ENCODE measurements at regions of chr3 and their contacts with region 1.

Region 1: DNA sequence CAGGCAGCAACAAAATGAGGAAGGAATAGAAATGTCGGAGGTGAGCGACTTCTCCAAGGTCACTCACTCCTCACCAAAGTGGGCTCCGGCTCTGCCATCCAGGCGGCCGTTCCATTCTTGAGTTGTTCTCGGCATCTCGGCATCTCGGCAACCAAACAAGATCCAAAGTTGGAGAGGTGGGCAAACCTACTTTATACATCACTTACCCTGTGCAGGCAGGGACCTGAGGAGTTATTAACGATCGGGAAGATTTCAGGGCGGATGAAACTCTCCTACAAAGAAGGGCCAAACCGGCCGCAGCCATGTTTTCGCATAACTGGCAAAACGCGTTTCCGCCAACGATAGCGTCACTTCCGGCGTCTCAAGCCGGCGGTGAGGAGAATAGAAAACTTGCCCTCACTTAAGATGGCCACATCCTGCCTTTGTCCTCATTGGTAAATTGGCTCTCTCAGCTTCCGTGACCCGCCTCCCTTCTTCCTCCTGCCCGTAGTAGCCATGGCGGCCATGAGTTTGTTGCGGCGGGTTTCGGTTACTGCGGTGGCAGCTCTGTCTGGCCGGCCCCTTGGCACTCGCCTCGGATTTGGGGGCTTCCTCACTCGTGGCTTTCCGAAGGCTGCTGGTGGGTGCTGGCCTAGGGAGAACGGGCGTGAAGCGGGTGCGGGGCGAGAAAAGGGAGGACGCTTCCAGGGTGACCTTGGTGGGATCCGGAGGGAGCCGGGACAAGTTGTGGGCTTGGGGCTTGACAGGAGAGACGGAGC is at the starts of genes MRPL47 and NDUFB5:
- DNase-seq: peak; percentile 93 to 96
- ATAC-seq: peak; percentile 100
- H3K4me3 ChIP-seq: peak within 1 kb of the TSS; percentile 82
- H3K27ac ChIP-seq: peak within 1 kb of the TSS; percentile 86
- H3K4me1 ChIP-seq: peaks cover 27% of the 10 kb centered on the region
- H3K27me3 ChIP-seq: no peaks in the 10 kb centered on the region
- CTCF ChIP-seq: no peak
- total RNA-seq, gene MRPL47: 29.4 to 62.6 (median 38.8) TPM
- total RNA-seq, gene NDUFB5: 161 to 233 (median 206) TPM

Region 2: GRCh38 chr3:179288845-179289244 is 315.7 kb before region 1 on chr3:
- intact Hi-C with region 1: no loop called
- DNase-seq: no peak
- ATAC-seq: no peak
- H3K4me3 ChIP-seq: no peak overlapping the region
- H3K27ac ChIP-seq: no peak overlapping the region
- H3K4me1 ChIP-seq: no peaks in the 10 kb centered on the region
- H3K27me3 ChIP-seq: no peaks in the 10 kb centered on the region
- CTCF ChIP-seq: no peak

Region 3: DNA sequence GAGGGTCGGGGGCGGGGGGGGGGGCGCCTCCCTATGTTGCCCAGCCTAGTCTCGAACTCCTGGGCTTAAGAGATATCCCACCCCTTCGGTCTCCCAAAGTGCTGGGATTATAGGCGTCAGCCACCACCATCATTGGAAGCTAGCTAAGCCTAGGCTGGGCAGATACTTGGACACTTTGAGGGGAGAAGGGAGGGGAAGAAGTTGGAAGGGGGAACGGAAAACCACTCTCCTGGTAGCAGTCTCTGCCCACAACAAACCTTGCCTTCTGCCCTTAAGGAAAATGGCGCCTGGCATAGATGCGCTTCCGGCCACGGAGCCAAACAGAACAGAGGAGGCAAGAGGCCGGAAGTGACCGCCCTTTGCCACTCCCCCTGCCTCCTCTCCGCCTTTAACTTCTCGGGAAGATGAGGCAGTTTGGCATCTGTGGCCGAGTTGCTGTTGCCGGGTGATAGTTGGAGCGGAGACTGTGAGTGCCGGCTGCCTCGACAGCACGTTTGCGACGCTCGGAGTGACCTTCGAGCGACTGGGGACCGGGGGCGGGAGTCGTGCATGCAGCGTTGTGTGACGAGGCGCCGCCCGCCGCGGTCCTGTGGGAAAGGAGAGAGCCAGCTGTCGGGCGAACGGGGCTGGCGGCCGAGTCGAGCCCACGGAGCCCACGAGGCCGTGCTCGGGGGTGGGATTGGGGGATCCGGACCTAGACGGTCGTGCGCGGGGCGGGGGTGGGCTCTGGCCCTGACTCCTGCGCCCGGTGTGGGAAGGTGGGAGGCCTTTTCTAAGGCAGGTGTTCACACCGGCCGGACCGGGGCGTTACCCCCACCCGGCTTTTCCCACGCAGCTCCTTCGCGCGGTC is 256.9 kb before region 1 on chr3 and contains the start of gene MFN1:
- intact Hi-C with region 1: loop called in 1 of 2 experiments (anchors 10 kb)
- DNase-seq: peak; percentile 94 to 97
- ATAC-seq: peak; percentile 99 to 100 (median 99)
- H3K4me3 ChIP-seq: peak within 1 kb of the TSS; percentile 74
- H3K27ac ChIP-seq: peak within 1 kb of the TSS; percentile 88
- H3K4me1 ChIP-seq: peaks cover 7% of the 10 kb centered on the region
- H3K27me3 ChIP-seq: no peaks in the 10 kb centered on the region
- CTCF ChIP-seq: no peak
- total RNA-seq, gene MFN1: 23.8 to 42.9 (median 36.3) TPM